Lower leg skin (tissue), 4 donors: ENCODE measurements at regions of chr20 and their contacts with region 1.

Region 1: GRCh38 chr20:31859998-31860709 is 10.2 kb downstream of the DUSP15 start:
- DNase-seq: peak in 1 of 2 donors; percentile 82
- H3K4me3 ChIP-seq: no peak overlapping the region
- CTCF ChIP-seq: no peak
- POLR2A ChIP-seq: no peak

Region 2: DNA sequence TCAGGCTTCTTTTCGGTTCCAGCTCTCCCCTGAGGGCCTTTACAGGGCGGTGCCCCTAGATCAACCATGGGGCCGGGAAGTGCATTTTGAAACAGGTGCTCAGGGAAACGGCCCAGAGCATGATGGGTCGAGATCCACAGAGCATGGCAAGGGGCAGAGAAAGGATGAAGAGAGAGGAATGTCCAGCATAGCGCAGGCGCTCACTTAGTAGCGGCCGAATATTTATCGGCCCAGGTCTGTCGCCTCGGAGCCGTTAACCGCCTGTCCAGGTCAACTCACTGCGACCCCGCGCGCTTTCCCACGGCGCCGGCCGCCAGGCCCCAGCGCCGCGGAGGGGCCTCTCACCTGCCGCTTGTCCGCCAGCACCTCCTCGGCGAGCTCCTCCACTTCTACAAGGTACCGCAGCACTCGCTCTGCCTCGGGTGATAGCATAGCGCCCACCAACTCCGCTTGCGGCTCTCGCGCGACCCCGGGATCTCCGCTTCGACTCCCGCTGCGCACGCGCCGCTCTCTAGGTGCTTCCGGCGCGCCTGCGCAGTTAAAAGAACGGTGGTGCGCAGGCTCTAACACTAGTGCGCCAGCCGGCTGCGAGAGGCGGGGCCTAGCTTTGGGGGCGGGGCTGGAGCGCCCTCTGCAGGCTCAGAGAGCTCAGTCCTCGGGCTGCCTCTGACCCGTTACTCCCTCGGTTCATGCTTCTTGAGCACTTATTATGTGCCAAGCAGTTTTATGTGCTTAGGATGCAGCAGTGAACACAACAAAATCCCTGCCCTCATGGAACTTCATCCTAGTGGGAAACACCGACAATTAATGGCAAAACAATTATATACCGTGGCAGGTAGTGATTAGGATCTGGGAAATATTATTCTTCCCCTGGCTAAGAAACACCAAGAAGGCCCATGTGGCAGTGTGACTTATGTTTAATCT is 91.6 kb after region 1 on chr20 and contains the start of gene PDRG1:
- intact Hi-C with region 1: loop called (anchors 2 kb)
- DNase-seq: peak; percentile 93 to 98
- H3K4me3 ChIP-seq: peak within 1 kb of the TSS; percentile 51
- CTCF ChIP-seq: peak in 1 of 3 donors; percentile 60
- POLR2A ChIP-seq: peak in 1 of 2 donors; percentile 50
- total RNA-seq, gene PDRG1: 10.9 to 18.0 (median 13.0) TPM

Region 3: GRCh38 chr20:31987744-31988143 is 127.6 kb after region 1 on chr20:
- intact Hi-C with region 1: no loop called
- DNase-seq: no peak
- H3K4me3 ChIP-seq: no peak overlapping the region
- CTCF ChIP-seq: no peak
- POLR2A ChIP-seq: no peak